ENCODE measurements at regions of chr6 and their contacts with region 1.

Region 1: DNA sequence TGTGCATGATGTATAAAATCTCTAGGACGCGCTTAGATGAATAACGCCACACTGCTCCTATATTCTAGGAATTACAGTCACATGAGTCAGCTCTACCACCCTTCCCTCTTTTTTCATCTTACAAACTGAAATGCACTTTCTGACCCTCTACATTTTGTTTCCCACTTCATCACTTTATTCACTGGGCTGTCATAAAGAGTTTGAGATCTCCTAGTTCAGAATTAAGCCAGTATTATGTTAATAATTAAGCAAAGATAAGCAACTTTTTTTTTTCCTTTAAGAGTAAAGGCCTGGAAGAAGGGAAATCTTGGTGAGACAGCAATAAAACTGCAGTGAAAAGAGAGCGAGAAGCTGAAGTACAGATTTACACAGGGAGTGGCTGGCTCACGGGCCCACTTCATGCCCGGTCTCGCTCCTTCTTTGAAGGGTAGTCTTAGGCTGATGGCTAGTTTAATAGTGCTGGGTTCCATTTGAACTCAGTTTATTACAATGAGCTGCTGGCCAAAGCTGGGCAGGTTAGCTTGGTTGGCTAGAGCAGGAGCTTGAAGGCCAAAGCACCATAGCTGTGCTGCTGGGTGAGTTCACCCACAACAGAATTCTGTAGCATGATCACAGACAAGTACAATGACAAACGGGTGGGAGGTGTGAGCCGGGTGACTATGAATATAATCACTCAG is 110.6 kb downstream of the MAP7 start:
- DNase-seq: no peak
- H3K4me3 ChIP-seq: no peak overlapping the region
- H3K27ac ChIP-seq: peak overlapping the region; percentile 68 to 77 (median 71)
- H3K4me1 ChIP-seq: peaks cover 0 to 43% (median 0%) of the 10 kb centered on the region in 3 donors
- H3K27me3 ChIP-seq: no peaks in the 10 kb centered on the region
- CTCF ChIP-seq: no peak
- POLR2A ChIP-seq: no peak

Region 2: DNA sequence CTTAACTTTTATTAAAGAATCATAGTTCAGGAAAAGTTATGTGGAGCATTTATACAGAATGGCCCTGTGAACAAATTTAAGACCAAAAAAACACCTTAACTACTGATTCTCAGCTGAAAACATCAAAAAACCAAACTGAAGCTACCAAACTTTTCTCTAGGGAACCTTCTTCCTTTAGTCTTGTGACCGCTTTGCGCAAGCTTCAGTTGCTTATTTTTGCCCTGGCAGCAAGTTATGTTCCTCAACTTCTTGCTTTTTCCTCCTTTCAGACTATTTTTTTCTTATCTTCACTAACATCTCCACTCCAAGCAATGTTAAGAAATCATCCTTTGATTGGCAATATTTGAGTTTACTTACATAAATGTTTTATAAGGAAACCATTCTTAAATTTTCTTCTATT is 1158.4 kb before region 1 on chr6:
- intact Hi-C with region 1: no loop called
- DNase-seq: no peak
- H3K4me3 ChIP-seq: no peak overlapping the region
- H3K27ac ChIP-seq: peak overlapping the region in 1 of 4 donors; percentile 17
- H3K4me1 ChIP-seq: peaks cover 0 to 10% (median 0%) of the 10 kb centered on the region in 3 donors
- H3K27me3 ChIP-seq: no peaks in the 10 kb centered on the region
- CTCF ChIP-seq: no peak
- POLR2A ChIP-seq: no peak

Region 3: GRCh38 chr6:136387316-136387715 is 52.3 kb before region 1 on chr6:
- intact Hi-C with region 1: loop called (anchors 5 kb)
- DNase-seq: no peak
- H3K4me3 ChIP-seq: no peak overlapping the region
- H3K27ac ChIP-seq: no peak overlapping the region
- H3K4me1 ChIP-seq: no peaks in the 10 kb centered on the region
- H3K27me3 ChIP-seq: no peaks in the 10 kb centered on the region
- CTCF ChIP-seq: no peak
- POLR2A ChIP-seq: no peak